ENCODE measurements at regions of chr5 and their contacts with region 1.

Region 1: GRCh38 chr5:119418531-119419116 is 33.7 kb upstream of the HSD17B4 start:
- DNase-seq: no peak
- H3K4me3 Mint-ChIP-seq: no peak overlapping the region
- H3K27ac Mint-ChIP-seq: no peak overlapping the region
- H3K4me1 Mint-ChIP-seq: peaks cover 32% of the 10 kb centered on the region
- H3K27me3 Mint-ChIP-seq: no peaks in the 10 kb centered on the region
- CTCF ChIP-seq: no peak

Region 2: GRCh38 chr5:119079318-119079921 is 339.2 kb before region 1 on chr5:
- CTCF ChIA-PET with region 1: no interaction called
- POLR2A ChIA-PET with region 1: no interaction called
- intact Hi-C with region 1: no loop called
- DNase-seq: no peak
- H3K4me3 Mint-ChIP-seq: no peak overlapping the region
- H3K27ac Mint-ChIP-seq: no peak overlapping the region
- H3K4me1 Mint-ChIP-seq: peaks cover 23% of the 10 kb centered on the region
- H3K27me3 Mint-ChIP-seq: no peaks in the 10 kb centered on the region
- CTCF ChIP-seq: no peak

Region 3: GRCh38 chr5:119347991-119348390 is 70.6 kb before region 1 on chr5:
- CTCF ChIA-PET with region 1: no interaction called
- POLR2A ChIA-PET with region 1: no interaction called
- intact Hi-C with region 1: no loop called
- DNase-seq: no peak
- H3K4me3 Mint-ChIP-seq: no peak overlapping the region
- H3K27ac Mint-ChIP-seq: no peak overlapping the region
- H3K4me1 Mint-ChIP-seq: peaks cover 19% of the 10 kb centered on the region
- H3K27me3 Mint-ChIP-seq: no peaks in the 10 kb centered on the region
- CTCF ChIP-seq: no peak

Region 4: GRCh38 chr5:119367502-119368237 is 51.0 kb before region 1 on chr5:
- CTCF ChIA-PET with region 1: interaction called, 132 read pairs
- POLR2A ChIA-PET with region 1: interaction called, 174 read pairs
- intact Hi-C with region 1: no loop called
- DNase-seq: peak; percentile 81
- H3K4me3 Mint-ChIP-seq: peak overlapping the region; percentile 45
- H3K27ac Mint-ChIP-seq: peak overlapping the region; percentile 90
- H3K4me1 Mint-ChIP-seq: peaks cover 47% of the 10 kb centered on the region
- H3K27me3 Mint-ChIP-seq: no peaks in the 10 kb centered on the region
- CTCF ChIP-seq: no peak

Region 5: DNA sequence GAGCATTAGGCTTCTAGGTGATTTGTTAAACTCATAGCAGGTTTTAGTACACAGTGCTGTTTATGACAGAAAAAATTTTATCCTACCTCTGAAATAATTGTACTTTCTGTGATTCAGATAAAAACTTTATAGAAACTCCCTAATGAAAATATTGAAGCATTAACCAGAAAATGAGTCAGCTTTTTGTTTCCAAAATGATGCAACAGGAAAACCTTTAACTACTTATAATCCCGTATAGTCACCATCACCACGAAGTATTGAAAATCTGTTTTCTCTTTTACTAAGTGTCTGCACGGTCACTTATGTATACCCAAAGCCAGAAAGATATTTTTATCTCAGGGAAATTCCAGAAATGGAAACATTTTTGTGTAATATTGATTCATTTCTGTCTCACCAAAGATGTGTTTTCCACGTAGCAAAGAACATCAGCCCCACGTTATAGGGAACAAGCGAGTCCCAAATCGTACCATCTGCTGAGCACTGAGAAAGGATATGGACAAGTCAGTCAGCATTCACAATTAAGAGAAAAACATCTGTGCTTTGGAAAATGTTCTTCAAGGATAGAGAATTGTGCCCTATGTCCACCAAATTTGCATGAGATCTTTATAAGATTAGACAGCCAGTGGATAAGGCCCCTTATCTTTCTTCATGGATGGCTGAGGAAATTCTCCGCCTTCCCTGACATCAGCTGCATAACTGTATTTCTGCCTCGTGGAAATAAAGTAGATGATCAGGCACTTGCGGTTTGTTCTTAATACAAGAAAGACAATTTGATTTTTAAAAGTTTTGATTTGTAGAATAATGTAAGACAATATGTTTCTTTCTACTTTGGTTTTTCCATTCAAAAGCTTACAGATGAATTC is 20.9 kb before region 1 on chr5:
- CTCF ChIA-PET with region 1: interaction called, 71 read pairs
- POLR2A ChIA-PET with region 1: interaction called, 57 read pairs
- intact Hi-C with region 1: no loop called
- DNase-seq: peak; percentile 87
- H3K4me3 Mint-ChIP-seq: peak overlapping the region; percentile 63
- H3K27ac Mint-ChIP-seq: peak overlapping the region; percentile 94
- H3K4me1 Mint-ChIP-seq: peaks cover 48% of the 10 kb centered on the region
- H3K27me3 Mint-ChIP-seq: no peaks in the 10 kb centered on the region
- CTCF ChIP-seq: no peak

Region 6: DNA sequence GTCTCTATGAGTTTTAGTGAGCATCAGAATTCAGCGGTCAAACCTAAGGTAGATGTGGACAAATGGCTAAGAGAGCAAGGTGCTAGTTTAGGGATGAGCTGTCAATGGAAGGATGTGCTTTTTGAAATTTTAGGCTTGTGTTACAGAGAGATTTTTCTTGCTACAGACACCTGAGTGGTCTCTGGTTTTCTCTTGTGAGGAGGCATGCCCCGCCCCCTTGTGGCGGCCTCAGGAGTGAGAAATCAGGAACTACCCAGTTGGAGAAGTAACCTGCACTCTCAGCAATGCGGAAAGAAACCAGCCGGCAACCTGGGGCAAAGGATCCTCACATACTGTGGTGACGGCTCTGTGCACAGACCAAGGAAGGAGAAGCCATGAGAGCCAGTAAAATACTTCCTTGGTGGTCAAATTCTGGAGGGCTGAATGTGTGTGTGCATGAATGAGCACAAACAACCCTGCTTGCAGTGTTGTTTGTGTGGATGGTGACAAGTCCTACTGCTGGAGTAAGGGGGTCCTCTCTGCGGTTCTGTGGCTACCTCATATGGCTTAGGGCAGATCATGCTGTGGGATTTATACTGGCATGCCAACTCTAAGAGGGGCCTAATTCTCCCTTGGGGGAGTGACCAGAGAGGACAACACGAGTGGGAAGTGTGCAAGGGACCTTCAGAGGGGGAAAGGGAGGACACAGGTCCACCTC is 17.0 kb after region 1 on chr5:
- CTCF ChIA-PET with region 1: interaction called, 17 read pairs
- POLR2A ChIA-PET with region 1: interaction called, 4 read pairs
- intact Hi-C with region 1: no loop called
- DNase-seq: peak; percentile 69
- H3K4me3 Mint-ChIP-seq: no peak overlapping the region
- H3K27ac Mint-ChIP-seq: no peak overlapping the region
- H3K4me1 Mint-ChIP-seq: peaks cover 6% of the 10 kb centered on the region
- H3K27me3 Mint-ChIP-seq: no peaks in the 10 kb centered on the region
- CTCF ChIP-seq: peak; percentile 46

Region 7: GRCh38 chr5:119452373-119453039 is 33.9 kb after region 1 on chr5 and contains the start of gene HSD17B4:
- CTCF ChIA-PET with region 1: interaction called, 7 read pairs
- POLR2A ChIA-PET with region 1: interaction called, 41 read pairs
- intact Hi-C with region 1: no loop called
- DNase-seq: peak; percentile 95
- H3K4me3 Mint-ChIP-seq: peak within 1 kb of the TSS; percentile 87
- H3K27ac Mint-ChIP-seq: peak within 1 kb of the TSS; percentile 82
- H3K4me1 Mint-ChIP-seq: peaks cover 13% of the 10 kb centered on the region
- H3K27me3 Mint-ChIP-seq: no peaks in the 10 kb centered on the region
- CTCF ChIP-seq: no peak
- total RNA-seq, gene HSD17B4: 163 and 169 TPM in 2 replicates